Activated B cell treated with CpG ODN at 0.5 μM for 24 hours (primary cell): ENCODE measurements at regions of chr15 and their contacts with region 1.

Region 1: GRCh38 chr15:70504299-70504951 is 258.9 kb downstream of the UACA start:
- DNase-seq: peak; percentile 53
- ATAC-seq: peak; percentile 60
- H3K4me3 Mint-ChIP-seq: peak overlapping the region; percentile 70
- H3K27ac Mint-ChIP-seq: peak overlapping the region; percentile 90
- H3K4me1 Mint-ChIP-seq: peaks cover 73% of the 10 kb centered on the region
- H3K27me3 Mint-ChIP-seq: no peaks in the 10 kb centered on the region
- CTCF ChIP-seq: no peak

Region 2: DNA sequence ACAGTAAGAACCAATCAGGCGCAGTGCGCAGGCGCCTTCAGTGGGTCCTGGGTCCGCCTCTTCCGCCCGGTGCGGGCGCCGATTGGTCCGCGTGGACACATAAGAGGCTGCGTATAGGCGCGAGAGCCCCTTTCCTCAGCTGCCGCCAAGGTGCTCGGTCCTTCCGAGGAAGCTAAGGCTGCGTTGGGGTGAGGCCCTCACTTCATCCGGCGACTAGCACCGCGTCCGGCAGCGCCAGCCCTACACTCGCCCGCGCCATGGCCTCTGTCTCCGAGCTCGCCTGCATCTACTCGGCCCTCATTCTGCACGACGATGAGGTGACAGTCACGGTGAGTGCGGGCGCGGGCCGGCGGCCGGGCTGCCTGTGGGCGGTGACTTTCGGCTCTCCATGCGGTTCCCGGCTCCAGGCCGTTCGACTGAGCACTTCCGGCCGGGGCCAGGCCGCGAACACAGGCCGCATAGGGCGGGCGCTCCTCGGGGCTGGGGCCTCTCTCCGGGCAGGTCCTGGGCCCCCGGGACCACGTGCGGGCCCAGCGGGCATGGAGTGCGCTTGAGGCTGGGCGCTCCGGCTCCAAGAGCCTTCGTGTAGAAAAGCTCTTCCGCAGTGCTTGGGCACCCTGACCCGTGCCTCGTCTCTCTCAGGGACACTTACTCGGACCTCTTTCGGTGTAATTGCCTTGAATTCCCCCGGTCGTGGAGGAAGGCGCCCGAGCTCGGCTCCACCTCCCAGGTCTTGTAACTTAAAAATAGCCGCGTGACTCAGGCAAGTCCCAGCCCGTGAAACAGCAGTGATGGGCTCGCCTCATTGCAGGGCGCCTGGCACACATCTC is 1051.5 kb before region 1 on chr15 and contains the start of gene RPLP1:
- CTCF ChIA-PET with region 1: no interaction called
- POLR2A ChIA-PET with region 1: interaction called, 12 read pairs
- intact Hi-C with region 1: no loop called
- DNase-seq: peak; percentile 94
- ATAC-seq: peak; percentile 90
- H3K4me3 Mint-ChIP-seq: peak within 1 kb of the TSS; percentile 98
- H3K27ac Mint-ChIP-seq: peak within 1 kb of the TSS; percentile 99
- H3K4me1 Mint-ChIP-seq: peaks cover 46% of the 10 kb centered on the region
- H3K27me3 Mint-ChIP-seq: no peaks in the 10 kb centered on the region
- CTCF ChIP-seq: no peak
- total RNA-seq, gene RPLP1: 3,035 and 3,437 TPM in 2 replicates

Region 3: DNA sequence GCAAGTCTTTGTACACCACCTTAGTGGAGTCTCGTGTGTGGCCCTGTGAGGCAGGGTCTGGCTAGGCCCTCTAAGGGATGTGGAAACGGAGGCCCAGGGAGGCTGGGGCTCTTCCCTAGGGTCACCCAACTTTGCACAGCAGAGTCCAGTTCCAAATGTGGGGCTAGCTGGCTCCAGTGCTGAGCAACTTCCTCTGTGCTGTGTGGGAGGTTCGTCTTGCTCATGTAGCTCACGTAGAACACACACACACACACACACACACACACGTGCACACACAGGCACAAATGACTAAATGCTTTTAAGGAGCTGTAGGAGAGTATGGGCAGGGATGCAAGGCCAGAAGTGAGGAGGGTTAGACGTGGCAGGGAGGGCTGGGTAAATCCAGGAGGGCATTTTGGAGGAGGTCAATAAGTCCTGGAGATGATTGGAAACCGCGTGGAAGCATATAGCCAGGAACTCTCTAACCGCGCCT is 838.0 kb before region 1 on chr15:
- CTCF ChIA-PET with region 1: no interaction called
- POLR2A ChIA-PET with region 1: no interaction called
- intact Hi-C with region 1: no loop called
- DNase-seq: no peak
- ATAC-seq: peak; percentile 51
- H3K4me3 Mint-ChIP-seq: peak overlapping the region; percentile 36
- H3K27ac Mint-ChIP-seq: peak overlapping the region; percentile 67
- H3K4me1 Mint-ChIP-seq: peaks cover 55% of the 10 kb centered on the region
- H3K27me3 Mint-ChIP-seq: peaks cover 6% of the 10 kb centered on the region
- CTCF ChIP-seq: no peak

Region 4: DNA sequence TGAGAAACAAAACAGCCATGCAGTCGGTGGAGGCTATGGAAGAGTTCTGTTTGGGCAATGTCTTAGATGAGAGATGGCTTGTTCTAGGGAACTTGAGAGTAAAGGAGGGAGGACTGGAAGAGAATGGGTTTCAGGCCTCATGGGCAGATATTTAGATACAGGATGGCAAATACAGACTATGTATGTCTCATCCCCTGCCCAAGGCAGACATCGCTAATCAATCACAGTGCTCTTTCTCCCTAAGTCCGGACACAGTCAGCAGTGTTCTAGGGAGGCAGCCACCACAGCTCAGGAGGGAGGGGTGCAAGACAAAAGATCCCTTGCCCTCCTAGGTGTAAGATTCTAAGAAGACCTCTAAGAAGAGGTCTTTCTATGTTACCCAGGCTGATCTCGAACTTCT is 247.4 kb before region 1 on chr15:
- CTCF ChIA-PET with region 1: no interaction called
- POLR2A ChIA-PET with region 1: no interaction called
- intact Hi-C with region 1: no loop called
- DNase-seq: no peak
- ATAC-seq: no peak
- H3K4me3 Mint-ChIP-seq: no peak overlapping the region
- H3K27ac Mint-ChIP-seq: no peak overlapping the region
- H3K4me1 Mint-ChIP-seq: peaks cover 46% of the 10 kb centered on the region
- H3K27me3 Mint-ChIP-seq: no peaks in the 10 kb centered on the region
- CTCF ChIP-seq: no peak

Region 5: GRCh38 chr15:70528270-70528706 is 23.9 kb after region 1 on chr15:
- CTCF ChIA-PET with region 1: interaction called, 4 read pairs
- POLR2A ChIA-PET with region 1: interaction called, 36 read pairs
- intact Hi-C with region 1: loop called (anchors 1 kb)
- DNase-seq: peak; percentile 30
- ATAC-seq: peak; percentile 72
- H3K4me3 Mint-ChIP-seq: peak overlapping the region; percentile 47
- H3K27ac Mint-ChIP-seq: peak overlapping the region; percentile 85
- H3K4me1 Mint-ChIP-seq: peaks cover 48% of the 10 kb centered on the region
- H3K27me3 Mint-ChIP-seq: no peaks in the 10 kb centered on the region
- CTCF ChIP-seq: no peak